Activated B cell treated with CpG ODN at 0.5 μM for 24 hours (primary cell): ENCODE measurements at regions of chr6 and their contacts with region 1.

Region 1: GRCh38 chr6:42928986-42929820 is at the start of gene CNPY3:
- DNase-seq: peak; percentile 84
- ATAC-seq: peak; percentile 74
- H3K4me3 Mint-ChIP-seq: peak within 1 kb of the TSS; percentile 97
- H3K27ac Mint-ChIP-seq: peak within 1 kb of the TSS; percentile 97
- H3K4me1 Mint-ChIP-seq: peaks cover 58% of the 10 kb centered on the region
- H3K27me3 Mint-ChIP-seq: no peaks in the 10 kb centered on the region
- CTCF ChIP-seq: no peak
- total RNA-seq, gene CNPY3: 120 and 121 TPM in 2 replicates

Region 2: GRCh38 chr6:42782622-42783176 is 146.5 kb before region 1 on chr6:
- CTCF ChIA-PET with region 1: no interaction called
- POLR2A ChIA-PET with region 1: interaction called, 36 read pairs
- intact Hi-C with region 1: no loop called
- DNase-seq: peak; percentile 62
- ATAC-seq: peak; percentile 40
- H3K4me3 Mint-ChIP-seq: peak overlapping the region; percentile 97
- H3K27ac Mint-ChIP-seq: peak overlapping the region; percentile 100
- H3K4me1 Mint-ChIP-seq: peaks cover 36% of the 10 kb centered on the region
- H3K27me3 Mint-ChIP-seq: no peaks in the 10 kb centered on the region
- CTCF ChIP-seq: no peak

Region 3: DNA sequence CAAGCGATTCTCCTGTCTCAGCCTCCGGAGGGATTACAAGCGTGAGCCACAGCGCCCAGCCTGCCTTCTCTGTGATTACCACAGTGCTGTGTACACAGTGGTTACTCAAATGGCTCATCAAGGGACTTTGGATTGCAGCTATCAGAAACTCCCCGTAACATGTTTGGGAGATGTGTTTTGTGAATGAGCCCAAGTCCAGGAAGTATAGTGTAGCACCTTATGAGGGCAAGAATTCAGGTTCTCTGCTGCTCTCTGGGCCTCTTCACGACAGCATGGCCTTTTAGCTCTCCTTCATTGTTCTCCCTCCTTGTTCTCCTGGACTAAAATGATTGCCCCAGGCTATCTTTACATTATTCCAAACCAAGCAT is 83.9 kb before region 1 on chr6:
- CTCF ChIA-PET with region 1: no interaction called
- POLR2A ChIA-PET with region 1: no interaction called
- intact Hi-C with region 1: no loop called
- DNase-seq: no peak
- ATAC-seq: no peak
- H3K4me3 Mint-ChIP-seq: no peak overlapping the region
- H3K27ac Mint-ChIP-seq: no peak overlapping the region
- H3K4me1 Mint-ChIP-seq: peaks cover 7% of the 10 kb centered on the region
- H3K27me3 Mint-ChIP-seq: no peaks in the 10 kb centered on the region
- CTCF ChIP-seq: no peak

Region 4: DNA sequence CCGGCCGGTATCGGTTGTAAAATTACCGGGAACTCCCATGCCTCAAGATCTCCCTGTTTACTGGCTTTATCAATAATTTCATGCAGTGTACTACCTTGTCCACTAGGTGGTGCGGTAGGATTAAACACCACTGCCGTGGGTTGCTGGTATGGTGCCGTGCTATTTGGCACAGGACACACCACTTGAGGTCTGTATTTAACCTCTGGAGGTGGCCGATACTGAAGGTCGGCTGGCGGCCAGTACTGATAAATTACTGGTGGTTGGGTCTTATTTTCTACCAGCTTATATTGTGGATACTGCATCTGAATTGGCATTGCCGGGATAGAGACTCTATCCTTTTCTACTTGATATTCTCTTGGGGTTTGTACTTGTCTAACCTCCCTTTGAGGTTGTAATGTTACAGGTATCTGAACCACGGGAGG is 27.7 kb before region 1 on chr6:
- CTCF ChIA-PET with region 1: interaction called, 4 read pairs
- POLR2A ChIA-PET with region 1: interaction called, 4 read pairs
- intact Hi-C with region 1: loop called (anchors 1 kb)
- DNase-seq: no peak
- ATAC-seq: peak; percentile 100
- H3K4me3 Mint-ChIP-seq: no peak overlapping the region
- H3K27ac Mint-ChIP-seq: no peak overlapping the region
- H3K4me1 Mint-ChIP-seq: peaks cover 12% of the 10 kb centered on the region
- H3K27me3 Mint-ChIP-seq: no peaks in the 10 kb centered on the region
- CTCF ChIP-seq: peak; percentile 36

Region 5: GRCh38 chr6:42978839-42979522 is 49.8 kb after region 1 on chr6 and contains the start of gene PEX6:
- CTCF ChIA-PET with region 1: interaction called, 7 read pairs
- POLR2A ChIA-PET with region 1: interaction called, 97 read pairs
- intact Hi-C with region 1: loop called (anchors 1 kb)
- DNase-seq: peak; percentile 74
- ATAC-seq: peak; percentile 94
- H3K4me3 Mint-ChIP-seq: peak within 1 kb of the TSS; percentile 93
- H3K27ac Mint-ChIP-seq: peak within 1 kb of the TSS; percentile 95
- H3K4me1 Mint-ChIP-seq: peaks cover 36% of the 10 kb centered on the region
- H3K27me3 Mint-ChIP-seq: no peaks in the 10 kb centered on the region
- CTCF ChIP-seq: no peak
- total RNA-seq, gene PEX6: 11.8 and 13.2 TPM in 2 replicates

Region 6: DNA sequence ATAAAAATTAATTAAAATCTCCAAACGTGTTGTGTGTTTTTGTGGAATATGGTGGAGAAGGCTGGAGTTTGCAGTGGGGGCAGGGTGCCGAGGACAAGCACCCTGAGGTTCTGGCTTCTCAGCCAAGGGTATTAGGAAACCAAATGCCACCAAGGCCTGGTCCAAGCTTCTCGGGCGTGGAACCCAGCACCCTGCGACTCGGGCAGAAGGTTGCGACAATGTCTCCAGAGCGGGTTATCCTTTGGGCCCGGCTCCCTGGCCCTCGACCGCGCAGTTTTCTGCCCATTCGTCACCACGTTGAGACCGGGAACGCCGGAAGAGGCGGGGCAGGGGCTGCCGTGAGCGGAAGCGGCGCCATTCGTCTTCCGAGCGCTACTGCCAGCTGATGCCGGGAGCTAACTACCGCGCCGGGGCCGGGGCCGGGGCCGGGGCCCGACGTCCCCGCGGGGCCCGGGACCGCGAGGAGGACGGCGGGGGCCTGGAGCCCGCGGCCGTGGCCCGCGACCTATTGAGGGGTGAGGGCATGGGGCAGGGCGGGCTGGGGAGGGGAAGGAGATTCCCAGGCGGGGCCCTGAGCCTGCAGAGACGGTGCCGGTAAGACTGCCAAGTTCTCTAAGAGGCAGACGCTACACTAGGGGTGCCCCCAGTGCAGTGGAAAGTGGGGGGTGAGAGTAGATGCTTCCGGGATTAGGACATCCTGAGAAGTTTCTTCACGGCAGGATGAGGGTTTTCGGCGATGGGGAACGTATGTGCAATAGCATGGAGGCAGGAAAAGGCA is 92.3 kb after region 1 on chr6 and contains the start of gene RRP36:
- CTCF ChIA-PET with region 1: no interaction called
- POLR2A ChIA-PET with region 1: interaction called, 58 read pairs
- intact Hi-C with region 1: no loop called
- DNase-seq: peak; percentile 67
- ATAC-seq: peak; percentile 89
- H3K4me3 Mint-ChIP-seq: peak within 1 kb of the TSS; percentile 97
- H3K27ac Mint-ChIP-seq: peak within 1 kb of the TSS; percentile 84
- H3K4me1 Mint-ChIP-seq: peaks cover 20% of the 10 kb centered on the region
- H3K27me3 Mint-ChIP-seq: no peaks in the 10 kb centered on the region
- CTCF ChIP-seq: no peak
- total RNA-seq, gene RRP36: 51.7 and 53.9 TPM in 2 replicates

Region 7: DNA sequence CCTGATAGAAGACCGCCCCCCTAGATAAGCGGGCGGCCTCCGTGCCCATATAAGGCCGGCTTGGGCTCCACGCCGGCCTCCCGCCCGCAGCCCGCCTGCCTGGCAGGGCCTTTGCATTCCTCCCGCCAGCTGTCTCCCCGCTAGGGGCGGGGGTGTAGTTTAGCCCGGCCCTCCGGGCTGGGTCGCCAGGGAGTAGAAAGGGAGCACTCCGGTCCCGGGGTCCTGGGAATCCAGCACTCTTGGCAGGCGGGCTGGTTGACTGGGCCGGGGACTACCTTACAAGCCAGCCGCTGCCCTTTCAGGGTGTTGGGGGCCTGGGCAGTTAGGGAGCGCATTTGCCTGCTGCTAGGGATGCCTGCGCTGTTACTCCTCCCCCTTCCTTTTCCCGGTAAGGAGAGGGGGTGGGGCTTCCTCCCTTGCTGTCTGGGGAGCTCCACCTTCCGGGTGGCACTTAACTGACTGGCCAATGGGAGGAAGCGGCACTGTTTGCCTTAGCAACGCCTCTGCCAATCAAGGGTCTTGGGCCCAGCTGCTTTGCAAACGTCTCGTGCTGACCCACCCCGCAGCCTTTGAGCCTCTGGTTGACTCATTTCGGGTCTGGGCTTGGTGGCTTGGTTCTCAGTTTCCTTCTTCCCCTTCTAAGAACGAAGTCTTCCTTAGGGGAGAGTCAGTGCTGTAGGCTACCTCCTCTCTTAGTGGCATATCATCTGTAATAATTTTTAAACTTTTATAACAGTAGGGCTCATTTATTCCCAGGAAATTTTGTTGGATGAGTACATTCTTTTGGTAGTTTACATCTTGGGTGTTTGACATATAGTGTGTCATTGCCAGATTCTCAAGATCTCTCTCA is 245.3 kb after region 1 on chr6:
- CTCF ChIA-PET with region 1: no interaction called
- POLR2A ChIA-PET with region 1: interaction called, 8 read pairs
- intact Hi-C with region 1: loop called (anchors 1 kb)
- DNase-seq: peak; percentile 77
- ATAC-seq: peak; percentile 71
- H3K4me3 Mint-ChIP-seq: peak overlapping the region; percentile 73
- H3K27ac Mint-ChIP-seq: peak overlapping the region; percentile 90
- H3K4me1 Mint-ChIP-seq: peaks cover 48% of the 10 kb centered on the region
- H3K27me3 Mint-ChIP-seq: no peaks in the 10 kb centered on the region
- CTCF ChIP-seq: no peak

Region 8: DNA sequence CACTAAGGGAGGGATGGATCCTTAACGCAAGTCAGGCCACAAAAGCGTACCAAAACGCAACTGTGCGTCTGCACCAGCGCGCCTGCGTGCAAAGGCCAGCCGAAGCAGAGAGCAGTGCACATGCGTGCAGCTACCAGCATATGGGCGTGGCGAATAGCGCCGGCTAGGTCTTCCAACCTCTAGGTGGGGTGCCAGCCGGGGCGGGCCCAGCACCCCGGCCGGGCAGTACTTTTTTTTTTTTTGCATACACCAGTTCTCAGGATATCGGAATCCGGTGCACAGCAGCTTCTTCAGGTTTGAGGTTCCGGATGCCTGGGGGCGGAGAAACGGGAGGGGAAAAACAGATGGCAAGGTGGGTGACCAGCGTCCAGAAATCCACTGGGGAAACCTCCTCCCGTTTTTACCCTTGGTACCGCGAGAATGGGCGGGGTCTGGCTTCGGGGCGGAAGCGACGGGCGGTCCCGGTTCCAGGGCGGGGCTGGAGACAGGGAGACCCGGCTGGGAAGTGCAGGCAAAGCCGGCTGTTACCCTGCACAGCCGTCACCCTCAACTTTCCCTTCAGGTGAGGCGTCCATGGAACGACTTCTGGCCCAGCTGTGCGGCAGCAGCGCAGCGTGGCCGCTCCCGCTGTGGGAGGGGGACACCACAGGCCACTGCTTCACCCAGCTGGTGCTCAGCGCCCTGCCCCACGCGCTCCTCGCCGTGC is 498.4 kb after region 1 on chr6 and contains the start of gene ABCC10:
- CTCF ChIA-PET with region 1: no interaction called
- POLR2A ChIA-PET with region 1: interaction called, 16 read pairs
- intact Hi-C with region 1: no loop called
- DNase-seq: peak; percentile 90
- ATAC-seq: peak; percentile 93
- H3K4me3 Mint-ChIP-seq: peak within 1 kb of the TSS; percentile 95
- H3K27ac Mint-ChIP-seq: peak within 1 kb of the TSS; percentile 95
- H3K4me1 Mint-ChIP-seq: peaks cover 20% of the 10 kb centered on the region
- H3K27me3 Mint-ChIP-seq: no peaks in the 10 kb centered on the region
- CTCF ChIP-seq: no peak
- total RNA-seq, gene ABCC10: 59.5 and 74.6 TPM in 2 replicates